ENCODE measurements at regions of chr17 and their contacts with region 1.

Region 1: DNA sequence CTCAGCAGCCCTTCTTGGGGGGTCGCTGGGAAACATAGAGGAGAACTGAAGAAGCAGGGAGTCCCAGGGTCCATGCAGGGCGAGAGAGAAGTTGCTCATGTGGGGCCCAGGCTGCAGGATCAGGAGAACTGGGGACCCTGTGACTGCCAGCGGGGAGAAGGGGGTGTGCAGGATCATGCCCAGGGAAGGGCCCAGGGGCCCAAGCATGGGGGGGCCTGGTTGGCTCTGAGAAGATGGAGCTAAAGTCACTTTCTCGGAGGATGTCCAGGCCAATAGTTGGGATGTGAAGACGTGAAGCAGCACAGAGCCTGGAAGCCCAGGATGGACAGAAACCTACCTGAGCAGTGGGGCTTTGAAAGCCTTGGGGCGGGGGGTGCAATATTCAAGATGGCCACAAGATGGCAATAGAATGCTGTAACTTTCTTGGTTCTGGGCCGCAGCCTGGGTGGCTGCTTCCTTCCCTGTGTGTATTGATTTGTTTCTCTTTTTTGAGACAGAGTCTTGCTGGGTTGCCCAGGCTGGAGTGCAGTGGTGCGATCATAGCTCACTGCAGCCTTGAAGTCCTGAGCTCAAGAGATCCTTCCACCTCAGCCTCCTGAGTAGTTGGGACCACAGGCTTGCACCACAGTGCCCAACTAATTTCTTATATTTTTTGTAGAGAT is 3.4 kb downstream of the STH start:
- DNase-seq: peak; percentile 67 to 83
- ATAC-seq: peak; percentile 88
- H3K4me3 ChIP-seq: no peak overlapping the region
- H3K27ac ChIP-seq: no peak overlapping the region
- H3K4me1 ChIP-seq: no peaks in the 10 kb centered on the region
- H3K27me3 ChIP-seq: no peaks in the 10 kb centered on the region

Region 2: GRCh38 chr17:45428050-45428617 is 574.3 kb before region 1 on chr17:
- intact Hi-C with region 1: no loop called
- DNase-seq: peak; percentile 79 to 91
- ATAC-seq: peak; percentile 82
- H3K4me3 ChIP-seq: no peak overlapping the region
- H3K27ac ChIP-seq: no peak overlapping the region
- H3K4me1 ChIP-seq: no peaks in the 10 kb centered on the region
- H3K27me3 ChIP-seq: no peaks in the 10 kb centered on the region

Region 3: DNA sequence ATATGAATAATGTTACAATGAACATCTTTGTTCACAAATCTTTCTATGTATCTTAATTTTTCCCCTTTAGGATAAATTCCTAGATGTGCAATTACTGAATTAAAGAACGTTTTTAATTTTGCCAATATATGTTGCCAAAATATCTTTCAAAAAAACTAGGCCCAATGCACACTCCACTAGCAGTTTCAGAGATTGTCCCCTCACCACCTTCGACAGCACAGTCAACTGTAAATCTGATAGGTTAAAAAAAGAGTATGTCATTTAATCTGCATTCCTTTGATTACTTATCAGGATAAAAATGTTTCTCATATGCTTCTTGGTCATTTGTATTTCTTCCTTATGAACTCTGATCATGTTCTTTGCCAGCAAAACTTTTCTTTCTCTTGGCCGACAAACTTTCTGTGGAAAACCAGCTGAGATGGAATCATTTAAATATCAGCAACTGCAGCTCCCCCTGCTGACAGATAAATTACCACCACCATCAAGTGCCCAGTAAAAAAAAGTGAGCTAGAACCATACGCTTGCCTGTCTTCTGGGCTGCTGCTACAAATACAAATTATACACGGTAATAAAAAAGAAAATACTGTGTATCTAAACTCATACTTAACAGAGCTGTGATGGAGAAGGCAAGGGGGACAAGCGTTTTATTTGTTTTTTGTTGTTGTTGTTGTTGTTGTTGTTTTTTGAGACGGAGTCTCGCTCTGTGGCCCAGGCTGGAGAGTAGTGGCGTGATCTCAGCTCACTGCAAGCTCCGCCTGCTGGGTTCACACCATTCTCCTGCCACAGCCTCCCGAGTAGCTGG is 210.4 kb after region 1 on chr17:
- intact Hi-C with region 1: loop called in 1 of 2 experiments (anchors 1 kb)
- DNase-seq: no peak
- ATAC-seq: peak; percentile 88
- H3K4me3 ChIP-seq: no peak overlapping the region
- H3K27ac ChIP-seq: no peak overlapping the region
- H3K4me1 ChIP-seq: no peaks in the 10 kb centered on the region
- H3K27me3 ChIP-seq: no peaks in the 10 kb centered on the region

Measured in aorta (tissue), 5 donors.